Activated CD8-positive, alpha-beta T cell treated with anti-CD3 and anti-CD28 coated beads, Interleukin-2, amount 10 ng/mL, durations not matched to agents 7 days and 5 days (primary cell): ENCODE measurements at regions of chr1 and their contacts with region 1.

Region 1: GRCh38 chr1:159891275-159892157 is 8.4 kb downstream of the CFAP45 start:
- DNase-seq: peak; percentile 84
- ATAC-seq: peak; percentile 98
- H3K4me3 Mint-ChIP-seq: no peak overlapping the region
- H3K27ac Mint-ChIP-seq: no peak overlapping the region
- H3K4me1 Mint-ChIP-seq: peaks cover 21% of the 10 kb centered on the region
- H3K27me3 Mint-ChIP-seq: peaks cover 14% of the 10 kb centered on the region

Region 2: GRCh38 chr1:159214149-159214760 is 677.3 kb before region 1 on chr1:
- CTCF ChIA-PET with region 1: interaction called, 20 read pairs
- POLR2A ChIA-PET with region 1: no interaction called
- DNase-seq: peak; percentile 45
- ATAC-seq: no peak
- H3K4me3 Mint-ChIP-seq: no peak overlapping the region
- H3K27ac Mint-ChIP-seq: no peak overlapping the region
- H3K4me1 Mint-ChIP-seq: no peaks in the 10 kb centered on the region
- H3K27me3 Mint-ChIP-seq: peaks cover 12% of the 10 kb centered on the region

Region 3: GRCh38 chr1:159798893-159799292 is 92.6 kb before region 1 on chr1:
- CTCF ChIA-PET with region 1: interaction called, 483 read pairs
- POLR2A ChIA-PET with region 1: interaction called, 4 read pairs
- DNase-seq: peak; percentile 66
- ATAC-seq: peak; percentile 60
- H3K4me3 Mint-ChIP-seq: no peak overlapping the region
- H3K27ac Mint-ChIP-seq: no peak overlapping the region
- H3K4me1 Mint-ChIP-seq: peaks cover 25% of the 10 kb centered on the region
- H3K27me3 Mint-ChIP-seq: peaks cover 42% of the 10 kb centered on the region

Region 4: DNA sequence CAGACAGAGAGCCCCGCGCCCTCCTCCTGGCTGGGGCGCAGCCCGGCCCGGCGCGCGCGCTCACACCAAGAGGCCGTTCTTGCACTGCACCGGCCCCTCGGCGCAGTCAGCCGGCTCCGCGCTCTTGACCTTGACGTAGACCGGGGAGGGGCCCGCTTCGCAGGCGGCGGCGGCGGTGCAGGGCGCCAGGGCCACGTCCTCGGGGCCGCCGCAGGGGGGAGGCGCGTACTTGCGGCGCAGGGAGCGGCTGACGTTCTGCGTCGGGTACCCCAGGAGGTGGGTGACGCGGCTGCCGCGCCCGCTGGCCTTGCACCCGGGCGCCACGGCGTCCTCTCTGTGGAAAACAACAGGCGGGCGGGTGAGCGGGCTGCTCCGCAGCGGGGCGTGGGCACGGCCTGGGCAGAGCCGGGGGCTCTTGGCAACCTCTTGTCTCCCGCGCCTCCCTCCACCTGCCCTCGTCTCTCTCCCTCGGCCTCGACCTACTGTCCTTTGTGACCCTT is 36.8 kb before region 1 on chr1:
- CTCF ChIA-PET with region 1: interaction called, 10 read pairs
- POLR2A ChIA-PET with region 1: no interaction called
- DNase-seq: peak; percentile 79
- ATAC-seq: peak; percentile 94
- H3K4me3 Mint-ChIP-seq: peak overlapping the region; percentile 74
- H3K27ac Mint-ChIP-seq: peak overlapping the region; percentile 78
- H3K4me1 Mint-ChIP-seq: peaks cover 21% of the 10 kb centered on the region
- H3K27me3 Mint-ChIP-seq: peaks cover 13% of the 10 kb centered on the region

Region 5: DNA sequence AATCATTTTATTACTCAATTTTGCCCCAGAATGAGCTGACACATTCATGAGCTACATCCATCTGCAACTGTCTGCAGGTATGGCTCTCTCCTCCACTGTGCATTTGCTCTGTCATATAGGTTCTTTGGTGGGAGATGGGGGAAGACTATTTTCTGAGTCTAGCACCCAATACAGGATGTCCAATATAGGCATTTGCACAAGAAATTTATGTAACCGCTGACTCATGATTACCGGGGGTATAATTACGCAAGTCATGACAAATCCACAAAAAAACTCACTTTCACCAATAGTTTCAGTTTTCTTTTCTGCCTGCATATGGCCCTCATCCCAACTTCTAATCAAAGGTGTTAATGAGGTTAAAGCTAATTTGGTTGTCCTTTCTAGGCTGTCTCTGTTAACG is 11.5 kb before region 1 on chr1:
- CTCF ChIA-PET with region 1: interaction called, 21 read pairs
- POLR2A ChIA-PET with region 1: interaction called, 3 read pairs
- DNase-seq: no peak
- ATAC-seq: no peak
- H3K4me3 Mint-ChIP-seq: no peak overlapping the region
- H3K27ac Mint-ChIP-seq: no peak overlapping the region
- H3K4me1 Mint-ChIP-seq: no peaks in the 10 kb centered on the region
- H3K27me3 Mint-ChIP-seq: peaks cover 12% of the 10 kb centered on the region

Region 6: DNA sequence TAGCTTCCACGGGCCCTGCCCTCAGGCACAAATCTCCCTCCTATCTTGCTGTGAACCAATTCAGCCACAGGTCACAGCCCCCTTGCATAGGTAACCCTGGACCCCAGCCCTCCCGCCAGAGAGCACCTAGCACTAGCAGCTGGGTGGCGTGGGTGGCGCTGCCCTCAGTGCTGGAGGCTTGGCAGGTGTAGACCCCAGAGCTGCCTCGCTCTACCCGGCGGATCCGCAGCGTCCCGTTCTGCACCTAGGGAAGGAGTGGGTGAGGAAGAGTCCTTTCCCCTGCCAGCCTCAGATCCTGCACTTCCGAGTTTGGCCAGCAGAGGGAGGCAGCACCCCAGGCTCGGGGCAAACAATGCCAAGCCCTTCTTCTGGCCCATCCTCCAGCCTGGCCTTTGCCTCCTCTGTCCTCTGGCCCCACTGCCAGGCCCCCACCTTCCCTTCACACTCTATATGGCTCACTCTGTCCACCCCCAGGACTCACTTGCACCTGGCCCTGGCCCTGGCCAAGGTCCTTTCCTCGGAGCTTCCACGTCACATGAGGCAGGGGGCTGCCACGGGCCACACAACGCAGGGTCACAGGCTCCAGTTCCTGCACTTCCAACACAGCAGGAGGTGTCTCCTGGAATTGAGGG is 44.9 kb after region 1 on chr1:
- CTCF ChIA-PET with region 1: interaction called, 12 read pairs
- POLR2A ChIA-PET with region 1: no interaction called
- DNase-seq: peak; percentile 83
- ATAC-seq: peak; percentile 81
- H3K4me3 Mint-ChIP-seq: no peak overlapping the region
- H3K27ac Mint-ChIP-seq: no peak overlapping the region
- H3K4me1 Mint-ChIP-seq: peaks cover 5% of the 10 kb centered on the region
- H3K27me3 Mint-ChIP-seq: peaks cover 29% of the 10 kb centered on the region